B cell (primary cell): ENCODE measurements at regions of chr2 and their contacts with region 1.

Region 1: GRCh38 chr2:68909793-68910674 is 38.8 kb upstream of the BMP10 start:
- DNase-seq: peak; percentile 83
- ATAC-seq: peak; percentile 46
- H3K4me3 ChIP-seq: no peak overlapping the region
- H3K4me3 Mint-ChIP-seq: no peak overlapping the region
- H3K27ac ChIP-seq: no peak overlapping the region
- H3K27ac Mint-ChIP-seq: peak overlapping the region; percentile 62
- H3K4me1 ChIP-seq: peaks cover 24 to 29% of the 10 kb centered on the region in 2 donors
- H3K4me1 Mint-ChIP-seq: peaks cover 28% of the 10 kb centered on the region
- H3K27me3 ChIP-seq: no peaks in the 10 kb centered on the region
- H3K27me3 Mint-ChIP-seq: no peaks in the 10 kb centered on the region
- CTCF ChIP-seq: peak; percentile 95

Region 2: DNA sequence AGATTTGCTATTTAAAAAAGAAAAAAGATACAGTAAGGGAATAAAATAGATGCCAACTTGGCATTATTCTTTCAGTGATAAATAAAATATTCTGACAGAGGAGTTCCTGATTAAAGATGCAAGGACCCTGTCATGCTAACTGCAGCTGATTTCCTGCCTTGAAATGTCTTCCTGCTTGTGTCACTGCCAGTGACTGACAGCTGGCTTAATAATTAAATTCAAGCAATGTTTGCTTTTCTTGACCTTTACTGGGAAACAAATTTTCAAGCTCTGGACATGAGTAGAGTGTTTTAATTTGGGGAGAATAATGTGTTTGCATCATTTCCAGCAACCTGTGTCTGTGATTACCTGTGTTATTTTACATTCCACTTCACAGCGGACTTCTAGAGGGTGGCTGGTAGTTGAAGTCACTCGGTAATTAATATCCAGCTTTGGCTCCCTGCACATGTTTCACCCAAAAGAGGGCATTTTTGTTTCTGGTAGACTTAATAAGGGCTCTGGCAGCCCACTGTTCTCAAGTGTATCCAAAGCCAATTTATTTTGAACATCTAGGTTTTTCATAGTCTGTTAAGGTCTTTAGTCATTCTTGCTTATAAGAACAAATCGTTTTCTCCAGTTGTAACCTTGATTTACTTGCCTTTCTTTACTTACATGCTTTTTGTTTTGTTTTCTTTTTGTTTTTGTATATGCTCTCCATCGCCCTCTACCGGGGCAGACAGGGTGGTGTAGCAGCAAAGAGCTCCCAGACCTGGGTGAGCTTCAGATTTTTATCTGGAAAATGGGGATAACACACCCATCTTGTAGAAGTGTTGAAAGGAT is 315.2 kb before region 1 on chr2:
- CTCF ChIA-PET with region 1: interaction called, 10 read pairs
- POLR2A ChIA-PET with region 1: no interaction called
- intact Hi-C with region 1: no loop called
- DNase-seq: peak; percentile 64
- ATAC-seq: no peak
- H3K4me3 ChIP-seq: no peak overlapping the region
- H3K4me3 Mint-ChIP-seq: peak overlapping the region; percentile 9
- H3K27ac ChIP-seq: no peak overlapping the region
- H3K27ac Mint-ChIP-seq: no peak overlapping the region
- H3K4me1 ChIP-seq: peaks cover 5 to 9% of the 10 kb centered on the region in 2 donors
- H3K4me1 Mint-ChIP-seq: peaks cover 14% of the 10 kb centered on the region
- H3K27me3 ChIP-seq: no peaks in the 10 kb centered on the region
- H3K27me3 Mint-ChIP-seq: no peaks in the 10 kb centered on the region
- CTCF ChIP-seq: peak; percentile 96

Region 3: DNA sequence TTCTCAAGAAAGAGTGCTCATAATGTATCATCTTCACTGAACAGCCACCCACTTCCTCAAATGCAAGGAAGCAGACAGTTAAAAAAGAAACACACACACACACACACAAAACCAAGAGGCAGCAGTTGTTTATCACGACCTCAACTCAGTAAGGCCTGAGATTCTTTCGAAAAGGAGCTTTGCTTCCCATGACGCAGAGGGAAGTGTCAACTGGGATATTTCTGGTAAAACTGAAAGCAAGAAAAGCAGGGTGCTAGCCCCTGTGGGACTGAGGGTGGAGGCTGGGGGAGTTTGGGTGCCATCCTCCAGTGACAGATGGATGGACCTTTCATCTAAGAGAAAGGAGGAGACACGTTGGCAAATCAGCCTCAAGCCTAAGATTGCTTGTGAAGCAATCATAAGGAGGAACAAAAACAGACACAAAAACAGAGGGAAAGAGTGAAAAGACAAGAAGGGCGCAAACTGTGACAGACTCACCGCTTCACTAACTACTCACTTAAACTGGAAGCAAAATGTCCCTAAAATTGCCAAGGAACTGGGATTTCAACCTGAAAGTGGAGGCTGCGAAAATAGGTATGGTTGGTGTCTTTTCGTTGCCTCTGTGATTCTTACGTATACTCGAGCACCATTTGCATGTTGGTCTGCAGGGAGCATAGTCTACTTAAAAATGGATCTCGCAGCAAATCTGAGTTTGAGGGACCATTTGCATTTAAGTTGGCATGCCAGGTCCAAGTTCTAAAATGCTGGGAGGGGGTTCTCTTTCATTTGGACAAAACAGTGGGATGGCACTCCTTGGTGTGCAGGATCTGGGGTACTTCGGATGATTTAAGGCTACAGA is 175.1 kb before region 1 on chr2 and contains the start of gene ARHGAP25:
- CTCF ChIA-PET with region 1: interaction called, 10 read pairs
- POLR2A ChIA-PET with region 1: interaction called, 3 read pairs
- intact Hi-C with region 1: loop called (anchors 1 kb)
- DNase-seq: peak; percentile 83
- ATAC-seq: peak; percentile 78
- H3K4me3 ChIP-seq: peak within 1 kb of the TSS; percentile 47 to 92 (median 64)
- H3K4me3 Mint-ChIP-seq: no peak within 1 kb of the TSS
- H3K27ac ChIP-seq: peak within 1 kb of the TSS; percentile 93
- H3K27ac Mint-ChIP-seq: no peak within 1 kb of the TSS
- H3K4me1 ChIP-seq: peaks cover 66 to 77% of the 10 kb centered on the region in 2 donors
- H3K4me1 Mint-ChIP-seq: peaks cover 55% of the 10 kb centered on the region
- H3K27me3 ChIP-seq: no peaks in the 10 kb centered on the region
- H3K27me3 Mint-ChIP-seq: no peaks in the 10 kb centered on the region
- CTCF ChIP-seq: no peak
- total RNA-seq, gene ARHGAP25: 207 and 221 TPM in 2 replicates

Region 4: DNA sequence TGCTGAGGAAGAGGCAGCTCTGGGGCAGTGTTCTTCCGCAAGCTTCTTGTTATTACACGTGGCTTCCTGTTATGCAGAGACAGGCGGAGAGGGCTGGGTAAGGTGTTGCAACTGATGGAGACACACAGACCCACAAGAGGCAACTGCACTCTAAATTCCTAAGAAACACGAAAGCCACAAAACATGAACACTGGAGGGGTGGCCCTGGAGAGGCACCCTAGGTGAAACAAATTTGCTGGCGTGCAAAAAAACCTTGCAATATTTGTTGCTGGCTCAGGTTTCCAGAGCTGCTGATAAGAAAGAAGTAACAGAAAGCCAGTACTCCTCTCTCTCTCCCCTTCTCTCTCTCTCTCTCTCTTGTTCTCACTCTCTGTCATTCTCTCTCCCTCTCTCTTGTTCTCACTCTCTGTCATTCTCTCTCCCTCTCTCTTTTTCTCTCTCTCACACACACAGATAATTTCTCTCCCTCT is 143.6 kb before region 1 on chr2:
- CTCF ChIA-PET with region 1: interaction called, 5 read pairs
- POLR2A ChIA-PET with region 1: interaction called, 4 read pairs
- intact Hi-C with region 1: loop called (anchors 5 kb)
- DNase-seq: peak; percentile 74
- ATAC-seq: peak; percentile 44
- H3K4me3 ChIP-seq: peak overlapping the region in 3 of 5 experiments; percentile 9 to 48 (median 16)
- H3K4me3 Mint-ChIP-seq: peak overlapping the region; percentile 80
- H3K27ac ChIP-seq: peak overlapping the region; percentile 93 to 99
- H3K27ac Mint-ChIP-seq: peak overlapping the region; percentile 98
- H3K4me1 ChIP-seq: peaks cover 97 to 100% of the 10 kb centered on the region in 2 donors
- H3K4me1 Mint-ChIP-seq: peaks cover 94% of the 10 kb centered on the region
- H3K27me3 ChIP-seq: no peaks in the 10 kb centered on the region
- H3K27me3 Mint-ChIP-seq: no peaks in the 10 kb centered on the region
- CTCF ChIP-seq: no peak

Region 5: DNA sequence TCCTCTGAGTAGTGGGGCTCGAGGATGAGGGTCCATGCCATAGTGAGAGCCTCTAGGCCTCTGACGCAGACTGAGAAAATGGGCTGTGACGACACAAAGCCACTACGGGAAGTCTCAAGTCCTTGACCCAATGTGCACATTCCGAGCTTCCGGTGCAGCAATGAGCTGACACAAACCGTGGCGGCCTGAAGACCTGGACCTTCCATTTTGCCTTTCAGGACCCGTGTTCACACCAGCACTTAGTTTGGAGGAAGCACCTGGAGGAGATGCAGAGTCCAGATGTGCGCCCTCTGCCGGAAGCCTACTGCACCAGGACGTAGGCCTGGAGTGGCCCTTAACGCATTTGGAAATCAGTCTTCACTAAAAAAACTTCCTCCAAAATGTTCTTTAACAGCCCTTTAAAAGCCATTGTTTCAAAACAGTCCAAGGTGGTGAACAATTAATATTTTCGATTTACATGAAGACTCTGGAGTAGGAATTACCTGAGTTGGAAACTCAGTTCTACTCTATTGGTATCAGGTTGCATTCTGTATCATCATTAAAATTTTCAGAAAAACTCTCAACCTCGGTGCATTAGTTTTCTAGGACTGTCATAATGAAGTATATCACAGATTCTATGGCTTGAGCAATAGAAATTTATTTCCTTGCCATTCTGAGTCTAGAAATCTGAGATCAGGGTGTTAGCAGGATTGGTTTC is 72.7 kb before region 1 on chr2:
- CTCF ChIA-PET with region 1: interaction called, 56 read pairs
- POLR2A ChIA-PET with region 1: no interaction called
- intact Hi-C with region 1: loop called (anchors 1 kb)
- DNase-seq: peak; percentile 78
- ATAC-seq: peak; percentile 46
- H3K4me3 ChIP-seq: peak overlapping the region in 1 of 5 experiments; percentile 8
- H3K4me3 Mint-ChIP-seq: peak overlapping the region; percentile 26
- H3K27ac ChIP-seq: no peak overlapping the region
- H3K27ac Mint-ChIP-seq: peak overlapping the region; percentile 75
- H3K4me1 ChIP-seq: peaks cover 42 to 47% of the 10 kb centered on the region in 2 donors
- H3K4me1 Mint-ChIP-seq: peaks cover 54% of the 10 kb centered on the region
- H3K27me3 ChIP-seq: no peaks in the 10 kb centered on the region
- H3K27me3 Mint-ChIP-seq: no peaks in the 10 kb centered on the region
- CTCF ChIP-seq: peak; percentile 82